Activated naive CD4-positive, alpha-beta T cell treated with anti-CD3 and anti-CD28 coated beads for 36 hours (primary cell): ENCODE measurements at regions of chr22 and their contacts with region 1.

Region 1: DNA sequence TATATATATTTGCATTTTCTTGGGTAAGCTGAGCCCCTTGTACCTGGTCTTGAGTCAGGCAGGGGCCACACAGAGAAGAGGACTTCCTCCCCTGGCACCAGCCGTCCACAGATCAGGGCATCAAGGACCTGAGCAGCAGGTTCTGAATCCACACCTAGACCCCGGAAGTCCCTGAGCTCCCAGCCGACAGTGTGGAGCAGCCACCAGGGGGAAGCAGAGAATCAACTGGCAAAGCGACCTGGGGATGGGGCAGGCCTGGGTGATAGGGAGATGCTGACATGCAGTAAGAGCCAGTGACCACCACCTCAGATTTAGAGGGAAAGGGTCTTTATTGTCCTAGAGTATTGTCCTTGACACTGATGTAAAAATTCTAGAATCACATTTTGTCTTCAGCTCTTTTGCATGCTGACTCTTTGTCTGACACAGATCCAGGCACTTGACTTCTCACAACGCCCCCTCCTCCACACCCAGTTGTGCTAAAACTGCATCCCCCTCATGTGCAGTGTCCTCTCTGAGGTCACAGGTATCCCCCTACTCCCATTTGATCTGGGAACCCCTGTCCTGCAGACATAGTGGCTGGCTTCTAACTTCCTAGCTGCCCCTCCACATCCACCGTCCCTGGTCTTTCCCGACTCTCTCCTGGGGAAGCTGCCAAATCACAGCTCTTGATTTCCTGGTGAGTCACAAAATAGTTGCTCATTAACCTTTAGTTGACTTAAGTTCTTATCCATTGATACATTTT is 109.3 kb downstream of the GGTLC2 start:
- DNase-seq: peak; percentile 87
- H3K4me3 Mint-ChIP-seq: no peak overlapping the region
- H3K27ac Mint-ChIP-seq: no peak overlapping the region
- H3K4me1 Mint-ChIP-seq: peaks cover 19% of the 10 kb centered on the region
- H3K27me3 Mint-ChIP-seq: no peaks in the 10 kb centered on the region

Region 2: DNA sequence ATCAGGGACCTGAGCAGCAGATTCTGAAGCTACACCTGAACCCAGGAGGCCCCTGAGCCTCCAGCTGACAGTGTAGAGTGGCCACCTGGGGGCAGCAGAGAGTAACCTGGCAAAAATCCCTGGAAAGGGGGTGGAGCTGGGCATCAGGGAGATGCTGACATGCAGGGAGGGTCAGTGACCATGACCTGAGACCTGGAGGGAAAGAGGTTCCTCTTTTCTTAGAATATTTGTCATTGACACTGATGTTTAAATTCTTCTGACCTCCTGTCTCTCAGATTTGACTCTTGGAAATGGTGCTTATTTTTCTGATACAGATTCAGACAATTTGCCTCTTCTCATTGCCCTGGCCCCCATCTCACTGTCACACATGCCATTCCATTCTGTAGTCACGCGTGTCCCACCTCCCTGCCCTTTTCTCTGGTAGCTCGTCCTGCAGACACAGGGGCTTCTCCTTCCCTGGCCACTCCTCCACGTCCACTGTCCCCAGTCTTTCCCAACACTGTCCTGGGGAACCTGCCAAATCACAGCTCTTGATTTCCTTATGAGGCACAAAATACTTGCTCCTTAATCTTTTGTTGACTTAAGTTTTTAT is 16.7 kb after region 1 on chr22:
- CTCF ChIA-PET with region 1: interaction called, 21 read pairs
- intact Hi-C with region 1: no loop called
- DNase-seq: peak; percentile 61
- H3K4me3 Mint-ChIP-seq: no peak overlapping the region
- H3K27ac Mint-ChIP-seq: no peak overlapping the region
- H3K4me1 Mint-ChIP-seq: no peaks in the 10 kb centered on the region
- H3K27me3 Mint-ChIP-seq: peaks cover 7% of the 10 kb centered on the region

Region 3: GRCh38 chr22:22787786-22788459 is 34.2 kb after region 1 on chr22:
- CTCF ChIA-PET with region 1: interaction called, 11 read pairs
- intact Hi-C with region 1: no loop called
- DNase-seq: peak; percentile 74
- H3K4me3 Mint-ChIP-seq: no peak overlapping the region
- H3K27ac Mint-ChIP-seq: no peak overlapping the region
- H3K4me1 Mint-ChIP-seq: peaks cover 16% of the 10 kb centered on the region
- H3K27me3 Mint-ChIP-seq: no peaks in the 10 kb centered on the region

Region 4: DNA sequence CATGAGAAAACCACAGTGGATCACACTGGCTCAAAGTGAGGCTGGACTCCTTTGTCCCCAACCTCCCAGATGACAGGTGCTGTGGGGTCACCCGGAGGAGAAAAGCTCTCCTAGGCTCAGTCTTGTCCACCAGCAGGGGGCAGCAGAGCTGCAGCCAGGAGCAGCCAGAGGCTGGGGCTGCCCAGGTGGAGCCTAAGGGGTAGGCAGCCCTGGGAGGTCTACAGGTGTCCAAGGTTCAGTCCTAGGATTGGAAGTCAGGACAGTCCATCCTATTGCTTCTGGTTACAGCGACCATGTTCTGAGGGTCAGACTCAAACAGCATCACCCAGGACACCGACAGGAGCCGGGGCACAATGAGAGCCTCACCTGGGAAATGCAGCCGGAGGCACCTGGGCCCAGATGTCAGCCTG is 56.3 kb after region 1 on chr22:
- CTCF ChIA-PET with region 1: interaction called, 12 read pairs
- intact Hi-C with region 1: no loop called
- DNase-seq: peak; percentile 80
- H3K4me3 Mint-ChIP-seq: no peak overlapping the region
- H3K27ac Mint-ChIP-seq: no peak overlapping the region
- H3K4me1 Mint-ChIP-seq: peaks cover 12% of the 10 kb centered on the region
- H3K27me3 Mint-ChIP-seq: no peaks in the 10 kb centered on the region